Heart left ventricle (tissue), 16 donors: ENCODE measurements at regions of chr5 and their contacts with region 1.

Region 1: DNA sequence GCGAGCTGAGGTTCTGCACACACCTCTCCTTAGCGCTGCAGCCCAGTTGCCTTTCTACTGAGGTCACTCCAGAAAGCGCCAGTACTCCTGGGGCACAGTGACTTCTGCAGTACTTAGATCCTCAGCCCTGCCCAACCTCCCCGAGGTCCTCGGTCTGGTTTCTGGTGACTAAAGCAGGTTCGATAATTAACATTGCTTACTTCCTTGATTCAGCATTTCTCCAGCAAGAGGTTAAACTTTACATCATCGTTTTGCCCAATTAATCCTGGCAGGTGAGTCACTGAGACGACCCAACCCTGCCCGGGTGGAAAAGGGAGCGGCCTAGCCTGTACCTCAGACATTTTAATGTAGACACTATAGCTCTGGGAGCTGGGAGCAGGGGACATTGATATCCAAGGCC is 77.6 kb downstream of the PLAC8L1 start:
- DNase-seq: no peak
- ATAC-seq: no peak
- H3K4me3 ChIP-seq: no peak overlapping the region
- H3K27ac ChIP-seq: no peak overlapping the region
- H3K4me1 ChIP-seq: peaks cover 0 to 6% (median 0%) of the 10 kb centered on the region in 12 donors
- H3K27me3 ChIP-seq: no peaks in the 10 kb centered on the region
- CTCF ChIP-seq: no peak
- POLR2A ChIP-seq: no peak

Region 2: DNA sequence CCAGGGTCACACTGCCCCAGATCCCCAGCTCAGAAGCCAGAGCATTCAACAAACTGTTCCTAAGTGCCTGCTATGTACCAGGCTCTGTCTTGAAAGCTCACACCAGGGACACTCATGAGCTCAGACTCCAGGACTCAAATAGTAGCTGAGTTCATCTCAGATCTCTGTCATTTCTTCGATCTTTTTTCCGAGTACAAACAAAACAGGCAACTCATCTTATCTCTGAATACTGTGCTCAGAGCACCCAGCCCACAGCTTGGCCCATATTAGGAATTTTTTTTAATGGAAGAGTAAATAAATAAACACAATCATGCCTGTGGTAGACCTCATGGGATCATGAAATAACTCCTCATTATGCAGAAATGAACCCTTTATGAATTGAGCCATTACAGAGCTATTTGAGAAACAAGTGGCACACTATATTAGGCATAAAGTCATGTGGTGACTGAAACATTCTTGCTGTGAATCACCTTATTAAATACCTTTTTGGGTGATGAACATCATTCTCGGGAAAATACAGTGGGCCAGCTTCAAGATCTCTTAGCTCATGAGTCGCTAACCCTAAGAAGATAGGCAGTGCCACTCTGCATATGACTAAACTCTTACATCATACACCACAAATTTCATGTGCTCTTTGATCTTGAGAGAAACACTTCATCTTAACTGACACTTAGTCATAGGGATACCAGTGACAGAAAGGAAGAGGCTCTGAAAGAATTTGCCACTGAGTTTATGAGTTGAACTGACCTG is 81.5 kb before region 1 on chr5:
- intact Hi-C with region 1: no loop called
- DNase-seq: peak in 3 of 5 donors; percentile 24 to 51 (median 37)
- ATAC-seq: peak; percentile 85 to 93 (median 92)
- H3K4me3 ChIP-seq: no peak overlapping the region
- H3K27ac ChIP-seq: peak overlapping the region in 11 of 12 donors; percentile 11 to 69 (median 66)
- H3K4me1 ChIP-seq: peaks cover 0 to 53% (median 10%) of the 10 kb centered on the region in 12 donors
- H3K27me3 ChIP-seq: no peaks in the 10 kb centered on the region
- CTCF ChIP-seq: no peak
- POLR2A ChIP-seq: no peak

Region 3: DNA sequence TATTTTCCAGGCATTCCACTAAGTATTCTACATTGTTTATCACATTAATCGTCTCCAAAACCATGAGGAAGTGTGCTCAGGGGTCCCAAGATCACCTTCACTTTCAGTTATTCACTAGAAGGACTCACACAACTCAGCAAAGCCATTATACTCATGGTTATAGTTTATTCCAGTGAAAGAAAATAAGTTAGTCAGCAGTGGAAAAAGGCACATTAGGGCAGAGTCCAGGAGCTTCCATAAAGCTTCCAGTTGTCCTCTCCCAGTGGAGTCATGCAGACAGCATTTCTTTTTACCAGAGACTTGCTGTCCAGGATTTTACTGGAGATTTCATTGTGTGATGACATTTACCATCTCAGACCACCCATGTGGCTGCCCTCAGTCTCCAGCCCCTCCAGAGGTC is 39.9 kb before region 1 on chr5:
- intact Hi-C with region 1: loop called in 1 of 10 experiments (anchors 2 kb)
- DNase-seq: no peak
- ATAC-seq: no peak
- H3K4me3 ChIP-seq: no peak overlapping the region
- H3K27ac ChIP-seq: no peak overlapping the region
- H3K4me1 ChIP-seq: peaks cover 0 to 23% (median 4%) of the 10 kb centered on the region in 12 donors
- H3K27me3 ChIP-seq: no peaks in the 10 kb centered on the region
- CTCF ChIP-seq: no peak
- POLR2A ChIP-seq: no peak